ENCODE measurements at regions of chr5 and their contacts with region 1.

Region 1: DNA sequence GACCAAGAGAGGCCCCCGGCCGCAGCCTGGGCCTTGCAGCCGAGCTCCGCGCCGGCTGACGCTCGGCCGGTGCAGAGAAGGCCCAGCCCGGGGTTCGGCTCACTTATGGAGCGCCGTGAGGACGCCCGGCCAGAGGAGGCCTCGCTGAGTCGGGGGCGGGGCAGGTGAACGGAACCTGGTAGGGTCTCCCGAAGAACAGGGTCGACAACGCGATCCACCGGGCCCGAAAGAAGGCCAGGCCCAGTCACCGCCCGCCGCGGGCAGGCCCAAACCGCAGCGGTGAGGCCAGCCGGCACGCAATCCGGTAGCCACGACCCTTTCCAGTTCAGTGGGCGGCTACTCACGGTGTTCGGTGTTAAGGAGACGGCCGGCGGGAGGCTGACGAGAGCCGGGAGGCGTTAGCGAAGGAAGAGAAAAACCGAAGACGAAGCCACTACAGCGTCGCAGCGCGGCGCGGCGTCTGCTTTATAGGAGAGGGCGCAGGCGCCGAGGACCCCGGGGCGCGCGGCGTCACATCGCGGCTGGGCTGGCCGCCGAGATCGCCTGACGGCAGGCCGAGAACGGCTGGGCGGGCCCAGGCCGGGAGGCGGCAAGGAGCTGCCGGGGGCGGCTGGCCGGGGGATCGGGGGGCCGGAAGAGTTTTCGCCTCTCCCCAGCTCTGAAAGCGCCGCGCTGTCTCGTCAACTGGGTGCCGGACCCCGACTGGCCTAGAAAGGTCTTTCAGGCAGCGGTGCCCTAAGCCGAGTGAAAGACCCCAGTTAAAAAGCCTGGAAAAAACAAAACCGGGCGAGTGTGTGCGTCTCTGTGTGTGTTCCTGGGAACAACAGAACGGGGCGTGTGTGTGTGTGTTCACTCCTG is at the start of gene SKP1:
- DNase-seq: peak; percentile 41 to 93
- H3K4me3 ChIP-seq: peak within 1 kb of the TSS; percentile 63 to 95 (median 84)
- H3K27ac ChIP-seq: peak within 1 kb of the TSS; percentile 95
- H3K4me1 ChIP-seq: peaks cover 0 to 3% (median 0%) of the 10 kb centered on the region in 4 experiments; a peak in 4 of 7 replicates
- H3K27me3 ChIP-seq: no peaks in the 10 kb centered on the region
- CTCF ChIP-seq: no peak
- EP300 ChIP-seq: peak in 1 of 2 experiments; percentile 44; a peak in 1 of 3 replicates
- POLR2A ChIP-seq: peak; percentile 98 to 99
- RAD21 ChIP-seq: no peak
- total RNA-seq, gene SKP1: 326 and 332 TPM in 2 replicates

Region 2: DNA sequence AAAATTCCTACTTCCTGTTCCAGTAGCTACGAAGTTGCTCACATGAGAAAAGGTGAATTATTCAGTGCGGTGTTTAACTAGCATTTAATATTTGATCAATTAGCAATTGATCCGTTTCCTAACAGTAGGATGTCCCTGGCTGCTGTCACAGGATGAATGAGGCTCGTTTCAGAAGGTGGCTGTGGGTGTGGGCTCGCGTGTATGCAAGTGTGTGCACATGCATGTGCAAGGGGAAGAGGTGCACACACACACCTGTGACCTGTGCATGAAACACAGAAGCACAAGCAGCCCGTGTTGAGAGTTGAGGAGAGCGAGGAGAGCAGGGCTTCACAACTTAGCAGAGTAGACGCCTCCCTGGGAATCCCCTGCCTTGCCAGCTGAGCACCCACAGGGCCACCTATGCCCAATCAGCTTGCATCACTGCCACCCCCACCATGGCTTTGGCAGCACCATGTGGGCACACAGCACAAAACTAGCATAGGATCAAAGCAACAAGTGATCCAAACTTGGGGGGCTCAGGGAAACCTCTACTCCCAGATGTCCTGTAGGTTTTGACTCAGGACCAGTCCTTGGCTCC is 315.5 kb before region 1 on chr5:
- CTCF ChIA-PET with region 1: no interaction called
- POLR2A ChIA-PET with region 1: no interaction called
- DNase-seq: no peak
- H3K4me3 ChIP-seq: no peak overlapping the region
- H3K27ac ChIP-seq: no peak overlapping the region
- H3K4me1 ChIP-seq: no peaks in the 10 kb centered on the region
- H3K27me3 ChIP-seq: no peaks in the 10 kb centered on the region; a peak in 1 of 7 replicates
- CTCF ChIP-seq: no peak
- EP300 ChIP-seq: no peak
- POLR2A ChIP-seq: no peak
- RAD21 ChIP-seq: no peak

Region 3: GRCh38 chr5:134113902-134114875 is 62.6 kb before region 1 on chr5 and contains the start of gene TCF7:
- CTCF ChIA-PET with region 1: no interaction called
- POLR2A ChIA-PET with region 1: interaction called, 17 read pairs
- DNase-seq: peak; percentile 59 to 79
- H3K4me3 ChIP-seq: peak within 1 kb of the TSS; percentile 62 to 89 (median 77)
- H3K27ac ChIP-seq: no peak within 1 kb of the TSS
- H3K4me1 ChIP-seq: peaks cover 0 to 15% (median 9%) of the 10 kb centered on the region in 4 experiments; a peak in 6 of 7 replicates
- H3K27me3 ChIP-seq: peaks cover 20 to 35% (median 32%) of the 10 kb centered on the region in 4 experiments
- CTCF ChIP-seq: no peak
- EP300 ChIP-seq: no peak
- POLR2A ChIP-seq: peak in 1 of 2 experiments; percentile 79; a peak in 2 of 3 replicates
- RAD21 ChIP-seq: no peak
- total RNA-seq, gene TCF7: 6.8 and 8.5 TPM in 2 replicates

Region 4: DNA sequence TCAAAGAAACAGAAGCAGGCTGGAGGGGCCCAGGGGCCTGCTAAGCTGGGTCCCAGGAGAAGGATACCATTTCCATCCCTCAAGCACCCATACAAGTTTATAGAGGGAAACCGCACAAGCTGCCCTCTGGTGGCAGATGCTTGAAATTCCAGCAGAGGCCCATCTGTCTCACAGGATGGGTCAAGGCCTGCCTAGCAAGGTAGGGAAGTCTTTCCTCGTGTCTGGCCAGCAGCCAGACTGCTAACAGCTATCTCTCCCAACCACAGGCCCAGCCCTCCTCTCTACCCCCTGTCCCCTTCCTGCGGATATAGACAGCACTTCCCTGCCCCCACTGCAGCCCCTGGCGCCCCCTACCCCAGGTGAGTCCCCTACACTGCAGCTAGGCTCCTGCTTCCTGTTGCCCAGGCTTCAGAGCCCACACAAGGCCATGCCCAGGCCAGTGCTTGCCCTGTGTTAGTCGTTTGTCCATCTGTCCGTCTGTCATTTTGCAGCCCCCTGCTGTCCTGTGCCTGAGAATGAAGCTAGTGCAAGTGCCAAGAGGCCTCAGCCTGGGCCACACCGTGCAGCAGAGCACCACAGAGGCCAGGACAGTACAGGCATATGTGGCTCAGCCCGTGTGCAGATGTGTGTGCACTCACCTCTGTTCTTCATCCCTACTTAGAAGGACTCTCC is 36.1 kb before region 1 on chr5:
- CTCF ChIA-PET with region 1: interaction called, 4 read pairs
- POLR2A ChIA-PET with region 1: interaction called, 18 read pairs
- DNase-seq: peak; percentile 57 to 82
- H3K4me3 ChIP-seq: no peak overlapping the region
- H3K27ac ChIP-seq: no peak overlapping the region
- H3K4me1 ChIP-seq: no peaks in the 10 kb centered on the region; a peak in 3 of 7 replicates
- H3K27me3 ChIP-seq: no peaks in the 10 kb centered on the region
- CTCF ChIP-seq: peak in 2 of 3 experiments; percentile 85 to 90; a peak in 3 of 4 replicates
- EP300 ChIP-seq: no peak
- POLR2A ChIP-seq: no peak
- RAD21 ChIP-seq: peak; percentile 71 to 75

Region 5: GRCh38 chr5:134145779-134146581 is 30.8 kb before region 1 on chr5:
- CTCF ChIA-PET with region 1: interaction called, 4 read pairs
- POLR2A ChIA-PET with region 1: interaction called, 18 read pairs
- DNase-seq: peak; percentile 53 to 94
- H3K4me3 ChIP-seq: no peak overlapping the region
- H3K27ac ChIP-seq: no peak overlapping the region
- H3K4me1 ChIP-seq: no peaks in the 10 kb centered on the region
- H3K27me3 ChIP-seq: no peaks in the 10 kb centered on the region
- CTCF ChIP-seq: peak in 2 of 3 experiments; percentile 95 to 99; a peak in 3 of 4 replicates
- EP300 ChIP-seq: no peak
- POLR2A ChIP-seq: no peak
- RAD21 ChIP-seq: peak; percentile 62 to 77

Region 6: GRCh38 chr5:134161513-134162395 is 15.0 kb before region 1 on chr5:
- CTCF ChIA-PET with region 1: interaction called, 3 read pairs
- POLR2A ChIA-PET with region 1: interaction called, 31 read pairs
- DNase-seq: no peak
- H3K4me3 ChIP-seq: no peak overlapping the region
- H3K27ac ChIP-seq: no peak overlapping the region
- H3K4me1 ChIP-seq: no peaks in the 10 kb centered on the region
- H3K27me3 ChIP-seq: no peaks in the 10 kb centered on the region
- CTCF ChIP-seq: no peak
- EP300 ChIP-seq: no peak
- POLR2A ChIP-seq: no peak
- RAD21 ChIP-seq: no peak

Region 7: DNA sequence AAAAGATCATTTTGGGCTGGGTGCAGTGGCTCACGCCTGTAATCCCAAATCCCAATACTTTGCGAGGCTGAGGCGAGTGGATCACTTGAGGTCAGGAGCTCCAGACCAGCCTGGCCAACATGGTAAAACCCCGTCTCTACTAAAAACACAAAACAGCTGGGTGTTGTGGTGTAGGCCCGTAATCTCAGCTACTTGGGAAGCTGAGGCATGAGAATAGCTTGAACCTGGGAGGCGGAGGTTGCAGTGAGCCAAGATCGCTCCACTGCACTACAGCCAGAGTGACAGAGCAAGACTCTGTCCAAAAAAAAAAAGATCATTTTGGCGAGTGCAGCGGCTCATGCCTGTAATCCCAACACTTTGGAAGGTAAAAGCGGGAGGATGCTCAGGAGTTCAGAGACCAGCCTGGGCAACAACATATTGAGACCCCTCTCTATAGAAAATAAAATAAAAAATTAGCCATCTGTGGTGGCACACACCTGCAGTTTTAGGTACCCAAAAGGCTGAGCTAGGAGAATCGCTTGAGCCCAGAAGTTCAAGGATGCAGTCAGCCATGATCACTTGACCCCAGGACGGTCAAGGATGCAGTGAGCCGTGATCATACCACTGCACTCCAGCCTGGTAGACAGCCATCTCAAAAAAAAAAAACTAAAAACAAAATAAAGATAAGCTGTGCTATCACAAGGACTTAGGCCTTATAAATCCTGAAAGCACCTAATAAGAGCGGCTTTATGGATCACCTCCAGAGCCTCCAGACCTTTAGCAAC is 32.9 kb after region 1 on chr5:
- CTCF ChIA-PET with region 1: no interaction called
- POLR2A ChIA-PET with region 1: interaction called, 15 read pairs
- DNase-seq: no peak
- H3K4me3 ChIP-seq: no peak overlapping the region
- H3K27ac ChIP-seq: no peak overlapping the region
- H3K4me1 ChIP-seq: no peaks in the 10 kb centered on the region
- H3K27me3 ChIP-seq: no peaks in the 10 kb centered on the region
- CTCF ChIP-seq: no peak
- EP300 ChIP-seq: no peak
- POLR2A ChIP-seq: no peak
- RAD21 ChIP-seq: no peak

Region 8: DNA sequence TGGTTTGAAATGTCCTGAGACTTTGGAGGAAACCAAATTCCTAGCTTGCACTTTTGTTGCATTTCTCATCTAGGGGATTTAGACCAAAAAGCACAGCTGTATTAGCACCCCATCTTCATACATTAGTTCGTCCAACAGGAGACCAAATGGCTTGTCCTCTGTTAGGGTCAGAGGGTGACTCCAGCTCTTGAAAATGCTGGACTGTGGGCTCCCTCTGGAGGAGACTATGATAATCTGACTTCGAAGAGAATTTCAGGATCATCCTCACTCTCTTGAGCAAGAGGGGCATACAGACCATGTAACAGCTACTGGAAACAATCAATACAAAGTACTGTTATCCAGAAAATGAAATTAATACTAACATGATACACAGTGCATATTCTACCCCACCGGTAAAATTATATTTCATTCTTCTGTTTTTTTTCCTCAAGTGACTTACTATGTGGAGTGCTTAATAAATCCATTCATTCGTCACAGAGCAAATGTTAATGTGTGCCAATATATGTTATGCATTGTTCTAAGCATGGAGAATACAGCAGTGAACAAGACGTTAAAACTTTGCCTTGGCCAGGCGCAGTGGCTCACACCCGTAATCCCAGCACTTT is 112.9 kb after region 1 on chr5:
- CTCF ChIA-PET with region 1: interaction called, 120 read pairs
- POLR2A ChIA-PET with region 1: interaction called, 22 read pairs
- DNase-seq: peak; percentile 46 to 59
- H3K4me3 ChIP-seq: no peak overlapping the region
- H3K27ac ChIP-seq: no peak overlapping the region
- H3K4me1 ChIP-seq: no peaks in the 10 kb centered on the region
- H3K27me3 ChIP-seq: no peaks in the 10 kb centered on the region
- CTCF ChIP-seq: peak in 2 of 3 experiments; percentile 81 to 92; a peak in 3 of 4 replicates
- EP300 ChIP-seq: no peak
- POLR2A ChIP-seq: no peak
- RAD21 ChIP-seq: peak; percentile 98 to 99

Region 9: DNA sequence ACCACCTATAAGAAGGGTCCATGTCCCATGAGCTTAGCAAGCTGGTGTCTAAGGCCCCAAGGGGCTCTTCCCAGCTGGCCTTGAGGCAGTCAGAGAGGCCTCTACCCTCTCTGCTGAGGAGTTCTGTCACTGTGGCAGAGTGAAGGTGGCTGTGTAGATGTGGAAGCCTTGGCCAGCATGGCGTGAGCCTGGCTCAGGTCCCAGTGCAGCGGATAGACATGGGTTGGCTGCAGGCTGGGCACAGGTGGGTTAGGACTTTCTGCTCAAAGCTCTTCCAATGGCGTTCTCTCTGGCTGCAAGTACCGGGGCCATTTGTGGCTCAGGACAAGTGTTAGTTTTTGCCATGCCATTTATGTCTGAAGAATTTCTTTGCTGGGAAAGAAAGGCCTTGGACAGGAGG is 396.1 kb after region 1 on chr5:
- CTCF ChIA-PET with region 1: no interaction called
- POLR2A ChIA-PET with region 1: no interaction called
- DNase-seq: no peak
- H3K4me3 ChIP-seq: no peak overlapping the region
- H3K27ac ChIP-seq: no peak overlapping the region; the same call in 1 of the 2 replicates
- H3K4me1 ChIP-seq: no peaks in the 10 kb centered on the region; a peak in 1 of 7 replicates
- H3K27me3 ChIP-seq: no peaks in the 10 kb centered on the region
- CTCF ChIP-seq: no peak
- EP300 ChIP-seq: no peak
- POLR2A ChIP-seq: no peak
- RAD21 ChIP-seq: no peak

Measured in H1 (cell line).